Activated B cell treated with CpG ODN at 0.5 μM for 24 hours (primary cell): ENCODE measurements at regions of chr2 and their contacts with region 1.

Region 1: GRCh38 chr2:33475224-33476130 is 972 bp upstream of the RASGRP3 start:
- DNase-seq: no peak
- ATAC-seq: peak; percentile 60
- H3K4me3 Mint-ChIP-seq: peak overlapping the region; percentile 97
- H3K27ac Mint-ChIP-seq: peak overlapping the region; percentile 98
- H3K4me1 Mint-ChIP-seq: peaks cover 46% of the 10 kb centered on the region
- H3K27me3 Mint-ChIP-seq: no peaks in the 10 kb centered on the region
- CTCF ChIP-seq: peak; percentile 47

Region 2: GRCh38 chr2:32356735-32357644 is 1118.5 kb before region 1 on chr2 and contains the start of gene BIRC6:
- CTCF ChIA-PET with region 1: no interaction called
- POLR2A ChIA-PET with region 1: no interaction called
- intact Hi-C with region 1: loop called (anchors 10 kb)
- DNase-seq: peak; percentile 96
- ATAC-seq: peak; percentile 87
- H3K4me3 Mint-ChIP-seq: peak within 1 kb of the TSS; percentile 93
- H3K27ac Mint-ChIP-seq: peak within 1 kb of the TSS; percentile 90
- H3K4me1 Mint-ChIP-seq: peaks cover 41% of the 10 kb centered on the region
- H3K27me3 Mint-ChIP-seq: no peaks in the 10 kb centered on the region
- CTCF ChIP-seq: no peak
- total RNA-seq, gene BIRC6: 155 and 180 TPM in 2 replicates

Region 3: GRCh38 chr2:33457556-33458247 is 17.8 kb before region 1 on chr2:
- CTCF ChIA-PET with region 1: interaction called, 3 read pairs
- POLR2A ChIA-PET with region 1: interaction called, 12 read pairs
- intact Hi-C with region 1: loop called (anchors 2 kb)
- DNase-seq: no peak
- ATAC-seq: peak; percentile 65
- H3K4me3 Mint-ChIP-seq: peak overlapping the region; percentile 4
- H3K27ac Mint-ChIP-seq: no peak overlapping the region
- H3K4me1 Mint-ChIP-seq: peaks cover 6% of the 10 kb centered on the region
- H3K27me3 Mint-ChIP-seq: no peaks in the 10 kb centered on the region
- CTCF ChIP-seq: no peak

Region 4: GRCh38 chr2:33497221-33497650 is 21.8 kb after region 1 on chr2:
- CTCF ChIA-PET with region 1: interaction called, 17 read pairs
- POLR2A ChIA-PET with region 1: interaction called, 421 read pairs
- intact Hi-C with region 1: loop called (anchors 1 kb)
- DNase-seq: no peak
- ATAC-seq: peak; percentile 56
- H3K4me3 Mint-ChIP-seq: peak overlapping the region; percentile 62
- H3K27ac Mint-ChIP-seq: peak overlapping the region; percentile 87
- H3K4me1 Mint-ChIP-seq: peaks cover 96% of the 10 kb centered on the region
- H3K27me3 Mint-ChIP-seq: no peaks in the 10 kb centered on the region
- CTCF ChIP-seq: no peak

Region 5: GRCh38 chr2:33529771-33530351 is 54.4 kb after region 1 on chr2:
- CTCF ChIA-PET with region 1: interaction called, 24 read pairs
- POLR2A ChIA-PET with region 1: interaction called, 92 read pairs
- intact Hi-C with region 1: loop called (anchors 1 kb)
- DNase-seq: no peak
- ATAC-seq: peak; percentile 33
- H3K4me3 Mint-ChIP-seq: peak overlapping the region; percentile 57
- H3K27ac Mint-ChIP-seq: peak overlapping the region; percentile 98
- H3K4me1 Mint-ChIP-seq: peaks cover 89% of the 10 kb centered on the region
- H3K27me3 Mint-ChIP-seq: no peaks in the 10 kb centered on the region
- CTCF ChIP-seq: no peak

Region 6: DNA sequence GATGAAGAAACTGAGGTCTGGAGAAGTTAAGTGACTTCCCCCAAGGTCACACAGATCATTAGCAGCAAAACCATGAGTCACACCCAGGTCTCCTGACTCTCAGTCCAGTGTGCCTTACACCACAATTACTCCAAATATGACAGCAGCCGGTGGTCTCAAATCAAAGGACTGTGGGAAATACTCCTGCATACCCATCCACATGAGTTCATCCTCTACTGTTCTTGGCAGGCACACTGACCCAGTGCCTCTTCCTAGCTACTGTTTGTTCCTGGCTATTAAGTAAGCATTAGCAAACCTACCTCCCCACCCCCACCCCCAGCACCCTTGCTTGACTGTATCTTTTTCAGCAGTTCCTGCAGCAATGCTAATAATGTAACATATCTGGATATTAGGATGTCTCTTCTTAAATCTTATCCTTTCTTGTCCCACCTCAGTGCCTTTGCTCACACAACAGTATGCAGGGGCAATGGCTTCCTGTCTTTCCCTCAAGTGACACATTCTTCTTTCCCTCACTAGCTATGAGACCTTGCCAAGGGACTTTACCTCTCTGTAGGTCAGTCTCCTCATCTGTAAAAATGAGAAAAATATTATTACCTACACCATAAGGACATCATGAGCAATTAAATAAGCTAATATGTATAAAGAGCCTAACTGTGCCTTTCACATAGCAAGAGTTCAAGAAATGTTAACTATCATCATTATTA is 77.4 kb after region 1 on chr2:
- CTCF ChIA-PET with region 1: interaction called, 6 read pairs
- POLR2A ChIA-PET with region 1: interaction called, 20 read pairs
- intact Hi-C with region 1: loop called (anchors 1 kb)
- DNase-seq: no peak
- ATAC-seq: no peak
- H3K4me3 Mint-ChIP-seq: no peak overlapping the region
- H3K27ac Mint-ChIP-seq: peak overlapping the region; percentile 26
- H3K4me1 Mint-ChIP-seq: peaks cover 23% of the 10 kb centered on the region
- H3K27me3 Mint-ChIP-seq: no peaks in the 10 kb centered on the region
- CTCF ChIP-seq: no peak

Region 7: GRCh38 chr2:33607178-33607803 is 131.8 kb after region 1 on chr2:
- CTCF ChIA-PET with region 1: no interaction called
- POLR2A ChIA-PET with region 1: no interaction called
- intact Hi-C with region 1: no loop called
- DNase-seq: no peak
- ATAC-seq: no peak
- H3K4me3 Mint-ChIP-seq: no peak overlapping the region
- H3K27ac Mint-ChIP-seq: no peak overlapping the region
- H3K4me1 Mint-ChIP-seq: no peaks in the 10 kb centered on the region
- H3K27me3 Mint-ChIP-seq: no peaks in the 10 kb centered on the region
- CTCF ChIP-seq: no peak